Activated B cell treated with CpG ODN at 0.5 μM for 24 hours (primary cell): ENCODE measurements at regions of chr1 and their contacts with region 1.

Region 1: DNA sequence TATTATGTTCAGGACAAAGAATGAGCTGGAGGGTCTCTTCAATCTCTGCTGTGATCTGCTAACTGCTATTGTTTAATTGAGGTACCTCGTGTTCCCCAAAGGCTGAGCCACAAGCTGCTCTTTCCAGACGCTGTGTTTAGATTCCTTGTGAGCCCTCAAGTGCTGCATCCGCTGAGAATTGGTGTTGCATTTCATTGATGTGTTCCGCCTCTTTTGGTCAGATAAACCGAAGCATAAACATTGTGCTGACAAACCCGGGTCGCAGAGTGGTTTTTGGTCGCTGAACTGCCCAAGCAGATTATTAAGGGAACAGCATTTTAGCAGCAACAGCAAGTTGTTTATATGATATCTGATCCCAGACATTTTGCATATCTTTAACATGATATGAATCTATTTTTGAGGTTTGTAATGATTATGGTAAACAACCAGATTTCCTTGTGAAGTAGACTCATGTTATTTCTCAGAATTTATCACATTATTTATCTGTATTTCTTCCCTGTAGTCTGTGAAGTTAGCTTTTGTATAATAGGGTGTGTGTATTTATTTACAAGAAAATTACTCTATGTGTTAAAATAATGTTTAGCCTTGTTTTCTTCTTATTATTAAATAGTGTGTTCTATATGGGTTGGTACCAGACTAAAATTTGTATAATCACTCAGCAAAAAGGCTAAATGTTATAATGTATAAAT is 217.2 kb upstream of the C1orf105 start:
- DNase-seq: no peak
- ATAC-seq: no peak
- H3K4me3 Mint-ChIP-seq: no peak overlapping the region
- H3K27ac Mint-ChIP-seq: no peak overlapping the region
- H3K4me1 Mint-ChIP-seq: peaks cover 22% of the 10 kb centered on the region
- H3K27me3 Mint-ChIP-seq: no peaks in the 10 kb centered on the region
- CTCF ChIP-seq: no peak

Region 2: DNA sequence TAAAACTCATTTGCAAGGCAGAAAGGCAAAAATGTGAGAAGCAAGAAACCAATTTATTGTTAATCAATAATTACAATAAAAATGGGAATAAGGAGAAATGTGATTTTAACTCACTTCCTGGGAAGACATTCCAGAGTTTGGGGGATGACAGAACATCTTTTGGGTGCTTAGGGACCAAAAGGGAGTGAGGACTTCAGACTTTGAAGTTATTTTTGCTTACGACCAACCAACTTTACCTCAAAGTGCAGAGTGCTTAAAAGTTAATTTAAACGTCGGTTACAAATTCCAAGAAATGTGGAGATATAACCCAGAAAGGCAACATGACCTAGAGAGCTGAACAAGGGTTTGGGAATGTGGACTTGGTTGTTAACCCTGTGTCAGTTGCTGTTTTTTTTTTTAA is 17.3 kb before region 1 on chr1:
- CTCF ChIA-PET with region 1: no interaction called
- POLR2A ChIA-PET with region 1: interaction called, 3 read pairs
- intact Hi-C with region 1: loop called (anchors 2 kb)
- DNase-seq: no peak
- ATAC-seq: no peak
- H3K4me3 Mint-ChIP-seq: no peak overlapping the region
- H3K27ac Mint-ChIP-seq: peak overlapping the region; percentile 92
- H3K4me1 Mint-ChIP-seq: peaks cover 83% of the 10 kb centered on the region
- H3K27me3 Mint-ChIP-seq: no peaks in the 10 kb centered on the region
- CTCF ChIP-seq: no peak

Region 3: GRCh38 chr1:172220376-172220775 is 17.1 kb after region 1 on chr1:
- CTCF ChIA-PET with region 1: no interaction called
- POLR2A ChIA-PET with region 1: no interaction called
- intact Hi-C with region 1: loop called (anchors 1 kb)
- DNase-seq: no peak
- ATAC-seq: no peak
- H3K4me3 Mint-ChIP-seq: no peak overlapping the region
- H3K27ac Mint-ChIP-seq: no peak overlapping the region
- H3K4me1 Mint-ChIP-seq: peaks cover 17% of the 10 kb centered on the region
- H3K27me3 Mint-ChIP-seq: no peaks in the 10 kb centered on the region
- CTCF ChIP-seq: no peak

Region 4: GRCh38 chr1:172515927-172516326 is 312.6 kb after region 1 on chr1:
- CTCF ChIA-PET with region 1: no interaction called
- POLR2A ChIA-PET with region 1: no interaction called
- intact Hi-C with region 1: no loop called
- DNase-seq: no peak
- ATAC-seq: no peak
- H3K4me3 Mint-ChIP-seq: no peak overlapping the region
- H3K27ac Mint-ChIP-seq: no peak overlapping the region
- H3K4me1 Mint-ChIP-seq: peaks cover 3% of the 10 kb centered on the region
- H3K27me3 Mint-ChIP-seq: peaks cover 1% of the 10 kb centered on the region
- CTCF ChIP-seq: no peak